Activated CD4-positive, alpha-beta T cell treated with anti-CD3 and anti-CD28 coated beads for 36 hours (primary cell): ENCODE measurements at regions of chr10 and their contacts with region 1.

Region 1: GRCh38 chr10:30591249-30591670 is 38.3 kb downstream of the LYZL2 start:
- DNase-seq: peak; percentile 57
- ATAC-seq: peak; percentile 66
- H3K4me3 Mint-ChIP-seq: no peak overlapping the region
- H3K27ac Mint-ChIP-seq: no peak overlapping the region
- H3K4me1 Mint-ChIP-seq: no peaks in the 10 kb centered on the region
- H3K27me3 Mint-ChIP-seq: peaks cover 11% of the 10 kb centered on the region

Region 2: GRCh38 chr10:30359373-30360206 is 231.7 kb before region 1 on chr10:
- CTCF ChIA-PET with region 1: interaction called, 22 read pairs
- POLR2A ChIA-PET with region 1: no interaction called
- intact Hi-C with region 1: no loop called
- DNase-seq: peak; percentile 80
- ATAC-seq: peak; percentile 94
- H3K4me3 Mint-ChIP-seq: no peak overlapping the region
- H3K27ac Mint-ChIP-seq: no peak overlapping the region
- H3K4me1 Mint-ChIP-seq: peaks cover 3% of the 10 kb centered on the region
- H3K27me3 Mint-ChIP-seq: no peaks in the 10 kb centered on the region

Region 3: DNA sequence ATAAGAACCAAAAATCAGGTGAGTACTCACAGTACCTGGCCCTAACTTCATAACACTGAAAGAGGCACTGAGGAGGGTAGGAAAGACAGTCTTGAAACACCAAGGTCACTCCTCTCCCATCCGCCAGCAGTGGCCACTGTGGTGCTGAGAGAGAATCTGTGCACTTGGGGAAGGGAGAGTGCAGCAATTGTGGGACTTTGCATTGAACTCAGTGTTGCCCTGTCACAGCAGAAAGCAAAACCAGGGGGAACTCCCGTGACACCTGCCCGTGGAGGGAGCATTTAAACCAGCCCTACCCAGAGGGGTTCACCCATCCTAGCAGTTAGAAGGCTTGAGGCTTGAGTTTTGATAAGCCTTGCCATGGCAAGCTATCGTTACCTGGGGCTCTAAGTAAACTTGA is 192.5 kb before region 1 on chr10:
- CTCF ChIA-PET with region 1: interaction called, 73 read pairs
- POLR2A ChIA-PET with region 1: no interaction called
- intact Hi-C with region 1: no loop called
- DNase-seq: peak; percentile 29
- ATAC-seq: peak; percentile 49
- H3K4me3 Mint-ChIP-seq: no peak overlapping the region
- H3K27ac Mint-ChIP-seq: no peak overlapping the region
- H3K4me1 Mint-ChIP-seq: peaks cover 16% of the 10 kb centered on the region
- H3K27me3 Mint-ChIP-seq: peaks cover 7% of the 10 kb centered on the region

Region 4: GRCh38 chr10:30420266-30420665 is 171.0 kb before region 1 on chr10:
- CTCF ChIA-PET with region 1: interaction called, 10 read pairs
- POLR2A ChIA-PET with region 1: no interaction called
- intact Hi-C with region 1: no loop called
- DNase-seq: no peak
- ATAC-seq: no peak
- H3K4me3 Mint-ChIP-seq: no peak overlapping the region
- H3K27ac Mint-ChIP-seq: no peak overlapping the region
- H3K4me1 Mint-ChIP-seq: peaks cover 30% of the 10 kb centered on the region
- H3K27me3 Mint-ChIP-seq: no peaks in the 10 kb centered on the region

Region 5: GRCh38 chr10:30562787-30563186 is 28.5 kb before region 1 on chr10:
- CTCF ChIA-PET with region 1: interaction called, 10 read pairs
- POLR2A ChIA-PET with region 1: no interaction called
- intact Hi-C with region 1: no loop called
- DNase-seq: peak; percentile 70
- ATAC-seq: peak; percentile 97
- H3K4me3 Mint-ChIP-seq: no peak overlapping the region
- H3K27ac Mint-ChIP-seq: no peak overlapping the region
- H3K4me1 Mint-ChIP-seq: peaks cover 4% of the 10 kb centered on the region
- H3K27me3 Mint-ChIP-seq: peaks cover 6% of the 10 kb centered on the region

Region 6: DNA sequence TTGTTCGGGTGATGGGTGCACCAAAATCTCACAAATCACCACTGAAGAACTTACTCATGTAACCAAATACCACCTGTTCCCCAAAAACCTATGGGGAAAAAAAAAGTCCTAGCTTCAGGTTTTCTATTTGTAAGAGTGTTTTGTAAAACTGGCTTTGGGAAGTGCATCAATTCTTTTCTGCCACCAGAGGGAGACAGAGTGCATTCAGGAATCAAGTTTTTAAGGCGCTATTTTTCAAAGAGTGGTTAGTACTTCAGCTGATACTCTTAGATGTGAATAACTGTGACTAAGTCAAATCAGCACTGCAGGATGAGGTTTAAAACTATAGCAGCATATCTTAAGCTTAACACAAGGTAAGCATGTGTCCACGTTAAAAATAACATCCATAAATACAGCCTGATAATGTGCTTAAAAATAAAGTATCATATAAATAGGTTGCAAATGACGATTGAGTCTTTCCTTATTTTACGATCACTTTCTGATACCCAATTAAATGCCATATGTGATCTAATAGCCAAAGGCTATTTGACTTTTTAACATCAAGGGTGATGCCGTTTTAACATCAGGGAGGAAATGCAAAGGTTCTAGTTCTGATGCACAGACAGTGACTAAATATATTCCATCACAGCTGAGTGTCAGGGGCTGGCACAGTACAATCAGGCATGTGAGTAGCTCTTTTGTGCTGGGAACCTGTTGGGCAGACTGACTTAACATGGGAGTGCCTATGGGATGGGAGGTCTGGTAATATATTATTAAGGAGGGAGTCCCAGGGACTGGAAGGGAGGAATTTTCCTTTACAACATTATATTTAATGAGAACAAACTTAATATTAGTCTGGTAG is 48.9 kb after region 1 on chr10:
- CTCF ChIA-PET with region 1: interaction called, 15 read pairs
- POLR2A ChIA-PET with region 1: no interaction called
- intact Hi-C with region 1: no loop called
- DNase-seq: no peak
- ATAC-seq: peak; percentile 40
- H3K4me3 Mint-ChIP-seq: no peak overlapping the region
- H3K27ac Mint-ChIP-seq: no peak overlapping the region
- H3K4me1 Mint-ChIP-seq: peaks cover 11% of the 10 kb centered on the region
- H3K27me3 Mint-ChIP-seq: peaks cover 37% of the 10 kb centered on the region